Caco-2 (cell line): ENCODE measurements at regions of chr17 and their contacts with region 1.

Region 1: DNA sequence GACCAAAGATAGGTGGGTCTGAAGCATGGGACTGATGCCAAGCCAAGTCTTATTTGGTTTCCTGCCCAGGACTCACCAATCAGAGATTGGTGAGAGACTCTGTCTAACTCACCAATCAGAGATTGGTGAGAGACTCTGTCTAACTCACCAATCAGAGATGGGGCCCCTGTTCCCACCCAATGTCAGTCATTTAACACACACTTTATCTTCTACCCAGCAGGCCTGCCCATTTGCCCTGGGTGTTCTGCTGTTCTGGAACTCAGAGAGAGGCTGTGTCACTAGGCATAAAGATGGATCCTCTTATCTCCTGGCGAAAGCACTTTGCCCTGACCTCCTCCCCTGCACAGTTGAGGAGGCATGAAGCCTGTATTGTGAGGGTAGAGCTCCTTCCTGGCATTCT is 5.4 kb upstream of the RHOT1 start:
- DNase-seq: no peak
- H3K4me3 ChIP-seq: no peak overlapping the region
- H3K4me3 Mint-ChIP-seq: no peak overlapping the region
- H3K27ac Mint-ChIP-seq: no peak overlapping the region
- H3K4me1 ChIP-seq: no peaks in the 10 kb centered on the region
- H3K4me1 Mint-ChIP-seq: no peaks in the 10 kb centered on the region
- H3K27me3 ChIP-seq: no peaks in the 10 kb centered on the region
- H3K27me3 Mint-ChIP-seq: no peaks in the 10 kb centered on the region
- CTCF ChIP-seq: no peak

Region 2: DNA sequence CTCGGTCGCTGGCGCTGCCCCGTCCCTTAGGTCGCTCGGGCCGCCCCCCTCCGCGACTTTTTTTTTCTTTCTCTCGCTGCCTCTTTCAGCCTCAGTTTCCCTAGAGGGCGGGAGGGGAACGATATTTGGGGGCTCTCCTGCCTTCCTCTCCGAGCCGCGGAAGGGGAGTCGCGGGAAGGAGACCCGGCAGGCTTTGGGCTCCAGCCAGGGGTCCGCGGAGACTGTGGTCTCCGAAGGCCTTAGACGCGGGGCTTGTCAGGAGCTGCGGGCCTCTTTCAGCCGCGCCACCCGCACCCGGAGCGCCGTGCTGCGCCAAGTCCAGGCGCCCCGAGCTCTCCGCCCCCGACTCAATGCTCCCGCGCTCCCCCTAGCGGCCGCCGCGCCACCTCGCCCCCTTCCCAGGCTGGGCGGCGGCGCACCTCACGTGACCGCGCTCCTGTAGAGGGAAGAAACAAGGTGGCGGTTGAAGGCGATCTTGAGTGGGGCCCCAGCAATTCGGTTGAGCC is 129.8 kb before region 1 on chr17 and contains the start of gene LRRC37B:
- CTCF ChIA-PET with region 1: interaction called, 6 read pairs
- POLR2A ChIA-PET with region 1: no interaction called
- intact Hi-C with region 1: loop called (anchors 5 kb)
- DNase-seq: peak; percentile 85 to 94
- H3K4me3 ChIP-seq: peak within 1 kb of the TSS; percentile 68
- H3K4me3 Mint-ChIP-seq: peak within 1 kb of the TSS; percentile 84
- H3K27ac Mint-ChIP-seq: peak within 1 kb of the TSS; percentile 45
- H3K4me1 ChIP-seq: peaks cover 9% of the 10 kb centered on the region; the same call in 1 of the 2 replicates
- H3K4me1 Mint-ChIP-seq: peaks cover 7% of the 10 kb centered on the region
- H3K27me3 ChIP-seq: no peaks in the 10 kb centered on the region
- H3K27me3 Mint-ChIP-seq: no peaks in the 10 kb centered on the region
- CTCF ChIP-seq: peak; percentile 88 to 98
- total RNA-seq, gene LRRC37B: 15.4 and 20.1 TPM in 2 replicates